HAP-1 (cell line): ENCODE measurements at regions of chr12 and their contacts with region 1.

Region 1: GRCh38 chr12:71014180-71014785 is 93.7 kb upstream of the PTPRR start:
- DNase-seq: peak in 1 of 2 experiments; percentile 12
- H3K4me3 ChIP-seq: no peak overlapping the region
- H3K4me1 ChIP-seq: no peaks in the 10 kb centered on the region
- H3K27me3 ChIP-seq: no peaks in the 10 kb centered on the region

Region 2: GRCh38 chr12:70733385-70733784 is 280.9 kb before region 1 on chr12:
- in situ Hi-C with region 1: loop called (anchors 25 kb)
- DNase-seq: peak; percentile 37 to 61
- H3K4me3 ChIP-seq: no peak overlapping the region
- H3K4me1 ChIP-seq: no peaks in the 10 kb centered on the region
- H3K27me3 ChIP-seq: peaks cover 10% of the 10 kb centered on the region